ENCODE measurements at regions of chr7 and their contacts with region 1.

Region 1: DNA sequence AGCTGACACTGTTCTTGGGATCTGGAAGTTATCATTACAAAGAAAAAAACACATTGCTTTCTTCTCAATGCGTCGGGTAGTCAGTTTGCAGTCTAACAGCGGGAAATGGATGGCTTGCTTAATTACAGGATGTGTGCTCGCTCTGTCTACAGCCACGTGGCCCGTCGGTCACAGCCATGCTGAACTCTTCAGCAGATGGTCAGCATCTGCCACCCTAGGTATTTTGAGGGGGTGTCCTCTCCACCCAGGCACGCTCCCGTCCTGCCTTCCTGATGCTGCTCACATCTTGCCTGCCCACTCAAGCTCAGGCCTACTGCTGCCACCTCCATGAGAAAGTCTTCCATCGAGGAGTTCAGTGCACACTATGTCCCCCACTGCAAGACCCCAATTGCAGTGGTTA is 20.3 kb upstream of the INMT start:
- DNase-seq: no peak
- ATAC-seq: peak in 1 of 4 donors; percentile 27
- H3K4me3 ChIP-seq: no peak overlapping the region
- H3K27ac ChIP-seq: no peak overlapping the region
- H3K4me1 ChIP-seq: no peaks in the 10 kb centered on the region
- H3K27me3 ChIP-seq: no peaks in the 10 kb centered on the region
- CTCF ChIP-seq: no peak
- POLR2A ChIP-seq: no peak

Region 2: DNA sequence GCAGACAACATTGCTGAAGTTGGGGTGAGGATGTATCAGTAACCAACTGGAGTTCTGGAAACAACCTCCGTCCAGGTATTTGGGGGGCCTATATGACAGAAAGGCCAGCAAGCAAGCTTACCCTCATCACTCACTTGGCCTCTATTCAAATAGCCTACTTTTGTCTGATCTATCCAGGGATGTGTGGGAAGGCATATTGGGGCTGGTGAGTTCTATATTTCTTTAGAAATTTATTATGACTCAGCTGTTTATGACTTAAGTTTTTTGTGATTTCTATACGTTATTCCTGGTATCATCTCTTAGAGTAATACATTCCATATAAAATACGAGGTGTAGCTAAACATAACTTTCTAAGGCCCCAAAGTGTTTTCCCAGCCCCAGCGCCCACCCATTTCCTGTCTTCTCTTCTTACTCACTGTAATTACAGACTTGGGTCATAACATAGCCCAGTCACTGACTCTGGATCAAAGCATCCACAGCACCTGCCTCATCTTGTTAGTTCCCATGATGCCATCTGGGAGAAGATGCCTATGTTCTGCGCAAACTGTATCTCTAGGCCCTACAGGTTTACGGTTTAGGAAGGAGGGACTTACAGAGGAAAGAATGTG is 118.9 kb before region 1 on chr7:
- intact Hi-C with region 1: loop called in 1 of 10 experiments (anchors 10 kb)
- DNase-seq: no peak
- ATAC-seq: no peak
- H3K4me3 ChIP-seq: no peak overlapping the region
- H3K27ac ChIP-seq: no peak overlapping the region
- H3K4me1 ChIP-seq: no peaks in the 10 kb centered on the region
- H3K27me3 ChIP-seq: no peaks in the 10 kb centered on the region
- CTCF ChIP-seq: no peak
- POLR2A ChIP-seq: no peak

Region 3: GRCh38 chr7:30625283-30625682 is 106.3 kb before region 1 on chr7:
- intact Hi-C with region 1: loop called in 4 of 10 experiments (anchors 5 to 10 kb)
- DNase-seq: no peak
- ATAC-seq: no peak
- H3K4me3 ChIP-seq: no peak overlapping the region
- H3K27ac ChIP-seq: no peak overlapping the region
- H3K4me1 ChIP-seq: no peaks in the 10 kb centered on the region
- H3K27me3 ChIP-seq: no peaks in the 10 kb centered on the region
- CTCF ChIP-seq: peak in 7 of 12 donors; percentile 15 to 46 (median 22)
- POLR2A ChIP-seq: no peak

Measured in heart left ventricle (tissue), 16 donors.